Sciatic nerve (tissue), 2 donors: ENCODE measurements at regions of chr19 and their contacts with region 1.

Region 1: GRCh38 chr19:18478569-18479311 is 40.8 kb upstream of the ISYNA1 start:
- DNase-seq: peak; percentile 88
- ATAC-seq: peak; percentile 87

Region 2: GRCh38 chr19:18562086-18562485 is 83.3 kb after region 1 on chr19:
- intact Hi-C with region 1: loop called (anchors 10 kb)
- DNase-seq: no peak
- ATAC-seq: peak; percentile 5